ENCODE measurements at regions of chr6 and their contacts with region 1.

Region 1: DNA sequence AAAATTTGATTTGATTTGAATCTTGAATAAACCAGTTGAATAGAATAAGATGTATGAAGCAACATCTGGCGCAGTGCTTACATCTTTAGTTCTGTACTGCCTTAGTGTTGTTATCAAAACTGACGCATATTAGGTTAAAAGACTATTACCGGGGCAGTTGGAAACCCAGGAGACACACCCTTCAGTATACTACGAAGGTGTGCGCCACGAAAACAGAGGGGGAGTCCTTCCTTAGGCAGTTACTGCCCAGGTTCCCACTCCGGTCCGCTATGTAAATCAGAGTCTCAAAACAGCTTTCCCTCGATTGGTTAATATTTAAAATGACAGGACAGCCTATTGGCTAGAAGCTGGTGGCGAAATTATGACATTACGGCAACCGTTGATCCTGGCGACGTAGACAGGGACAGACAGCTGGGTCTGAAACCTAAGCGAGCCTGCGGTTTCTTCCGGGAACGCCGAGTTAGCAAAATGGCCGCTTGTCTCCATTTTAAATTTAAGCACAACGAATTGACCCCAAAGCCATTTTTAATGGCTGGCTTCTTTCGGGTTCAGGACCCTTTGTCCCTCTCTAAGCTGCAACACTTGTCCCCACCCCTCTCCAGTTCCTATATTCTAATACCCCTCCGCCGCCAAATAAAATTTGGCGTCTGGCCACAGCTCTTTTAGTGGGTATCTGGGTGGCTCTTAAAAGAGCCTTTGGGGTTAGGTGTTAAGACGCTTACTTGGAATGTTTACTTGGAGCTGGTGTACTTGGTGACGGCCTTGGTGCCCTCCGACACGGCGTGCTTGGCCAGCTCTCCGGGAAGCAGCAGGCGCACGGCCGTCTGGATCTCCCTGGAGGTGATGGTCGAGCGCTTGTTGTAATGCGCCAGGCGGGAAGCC is 35.8 kb downstream of the HFE start:
- DNase-seq: peak; percentile 99
- ATAC-seq: peak; percentile 55
- H3K4me3 ChIP-seq: peak overlapping the region; percentile 70 to 91
- H3K27ac ChIP-seq: peak overlapping the region; percentile 99
- H3K4me1 ChIP-seq: peaks cover 47 to 69% of the 10 kb centered on the region in 2 experiments
- H3K27me3 ChIP-seq: no peaks in the 10 kb centered on the region
- CTCF ChIP-seq: no peak
- POLR2A ChIP-seq: peak; percentile 98
- RAD21 ChIP-seq: peak; percentile 30

Region 2: GRCh38 chr6:26054857-26055669 is 68.0 kb before region 1 on chr6:
- CTCF ChIA-PET with region 1: no interaction called
- POLR2A ChIA-PET with region 1: interaction called, 41 read pairs
- RAD21 ChIA-PET with region 1: no interaction called
- intact Hi-C with region 1: loop called (anchors 1 kb)
- DNase-seq: peak; percentile 98
- ATAC-seq: peak; percentile 70
- H3K4me3 ChIP-seq: peak overlapping the region; percentile 52 to 73
- H3K27ac ChIP-seq: peak overlapping the region; percentile 85
- H3K4me1 ChIP-seq: peaks cover 41 to 68% of the 10 kb centered on the region in 2 experiments
- H3K27me3 ChIP-seq: no peaks in the 10 kb centered on the region
- CTCF ChIP-seq: 0 out of 6 replicates have a peak, but pooled peaks of 1 of the 3 experiments have one; percentile 5
- POLR2A ChIP-seq: no peak
- RAD21 ChIP-seq: peak; percentile 30

Region 3: DNA sequence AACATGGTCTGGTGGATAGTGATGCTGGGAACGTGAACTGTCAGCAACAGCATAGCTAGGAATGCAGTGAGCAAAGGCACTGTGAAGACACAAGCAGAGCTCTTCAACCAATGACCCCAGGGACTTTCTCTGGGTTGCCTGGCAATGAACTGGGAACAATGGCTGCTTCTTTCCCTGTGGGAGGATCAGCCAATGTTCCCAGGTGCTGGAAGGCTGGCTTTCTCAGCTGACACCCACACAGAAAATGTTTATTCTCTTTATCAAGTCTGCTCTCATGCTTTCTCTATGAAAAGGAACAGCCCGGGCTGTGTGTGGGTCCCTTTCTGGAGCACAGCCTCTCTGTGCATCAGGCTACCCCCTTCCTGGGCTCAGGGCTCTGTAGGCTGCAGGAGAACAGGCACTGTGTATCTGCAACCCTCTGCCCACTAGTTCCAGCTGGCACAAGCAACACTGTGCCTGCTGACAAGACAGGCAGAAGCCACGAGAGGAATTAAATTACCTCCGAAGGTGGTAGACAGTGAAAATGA is 18.4 kb after region 1 on chr6:
- CTCF ChIA-PET with region 1: no interaction called
- POLR2A ChIA-PET with region 1: interaction called, 61 read pairs
- RAD21 ChIA-PET with region 1: no interaction called
- intact Hi-C with region 1: no loop called
- DNase-seq: no peak
- ATAC-seq: no peak
- H3K4me3 ChIP-seq: no peak overlapping the region
- H3K27ac ChIP-seq: no peak overlapping the region
- H3K4me1 ChIP-seq: no peaks in the 10 kb centered on the region
- H3K27me3 ChIP-seq: no peaks in the 10 kb centered on the region
- CTCF ChIP-seq: no peak
- POLR2A ChIP-seq: no peak
- RAD21 ChIP-seq: no peak

Region 4: GRCh38 chr6:26183581-26184366 is 60.7 kb after region 1 on chr6:
- CTCF ChIA-PET with region 1: no interaction called
- POLR2A ChIA-PET with region 1: interaction called, 53 read pairs
- RAD21 ChIA-PET with region 1: no interaction called
- intact Hi-C with region 1: no loop called
- DNase-seq: no peak
- ATAC-seq: no peak
- H3K4me3 ChIP-seq: no peak overlapping the region
- H3K27ac ChIP-seq: no peak overlapping the region
- H3K4me1 ChIP-seq: peaks cover 3 to 14% of the 10 kb centered on the region in 2 experiments; a peak in 3 of 4 replicates
- H3K27me3 ChIP-seq: no peaks in the 10 kb centered on the region
- CTCF ChIP-seq: no peak
- POLR2A ChIP-seq: no peak
- RAD21 ChIP-seq: no peak

Region 5: GRCh38 chr6:26249957-26250697 is 127.1 kb after region 1 on chr6:
- CTCF ChIA-PET with region 1: no interaction called
- POLR2A ChIA-PET with region 1: no interaction called
- RAD21 ChIA-PET with region 1: no interaction called
- intact Hi-C with region 1: no loop called
- DNase-seq: no peak
- ATAC-seq: no peak
- H3K4me3 ChIP-seq: no peak overlapping the region
- H3K27ac ChIP-seq: no peak overlapping the region
- H3K4me1 ChIP-seq: no peaks in the 10 kb centered on the region
- H3K27me3 ChIP-seq: no peaks in the 10 kb centered on the region
- CTCF ChIP-seq: no peak
- POLR2A ChIP-seq: no peak
- RAD21 ChIP-seq: no peak

Region 6: GRCh38 chr6:27132532-27133280 is 1009.7 kb after region 1 on chr6:
- CTCF ChIA-PET with region 1: no interaction called
- POLR2A ChIA-PET with region 1: interaction called, 7 read pairs
- RAD21 ChIA-PET with region 1: no interaction called
- intact Hi-C with region 1: loop called (anchors 2 kb)
- DNase-seq: peak; percentile 100
- ATAC-seq: peak; percentile 75
- H3K4me3 ChIP-seq: peak overlapping the region; percentile 62 to 71
- H3K27ac ChIP-seq: peak overlapping the region; percentile 99
- H3K4me1 ChIP-seq: peaks cover 21 to 38% of the 10 kb centered on the region in 2 experiments
- H3K27me3 ChIP-seq: no peaks in the 10 kb centered on the region
- CTCF ChIP-seq: no peak
- POLR2A ChIP-seq: peak; percentile 98
- RAD21 ChIP-seq: no peak